ENCODE measurements at regions of chr2 and their contacts with region 1.

Region 1: DNA sequence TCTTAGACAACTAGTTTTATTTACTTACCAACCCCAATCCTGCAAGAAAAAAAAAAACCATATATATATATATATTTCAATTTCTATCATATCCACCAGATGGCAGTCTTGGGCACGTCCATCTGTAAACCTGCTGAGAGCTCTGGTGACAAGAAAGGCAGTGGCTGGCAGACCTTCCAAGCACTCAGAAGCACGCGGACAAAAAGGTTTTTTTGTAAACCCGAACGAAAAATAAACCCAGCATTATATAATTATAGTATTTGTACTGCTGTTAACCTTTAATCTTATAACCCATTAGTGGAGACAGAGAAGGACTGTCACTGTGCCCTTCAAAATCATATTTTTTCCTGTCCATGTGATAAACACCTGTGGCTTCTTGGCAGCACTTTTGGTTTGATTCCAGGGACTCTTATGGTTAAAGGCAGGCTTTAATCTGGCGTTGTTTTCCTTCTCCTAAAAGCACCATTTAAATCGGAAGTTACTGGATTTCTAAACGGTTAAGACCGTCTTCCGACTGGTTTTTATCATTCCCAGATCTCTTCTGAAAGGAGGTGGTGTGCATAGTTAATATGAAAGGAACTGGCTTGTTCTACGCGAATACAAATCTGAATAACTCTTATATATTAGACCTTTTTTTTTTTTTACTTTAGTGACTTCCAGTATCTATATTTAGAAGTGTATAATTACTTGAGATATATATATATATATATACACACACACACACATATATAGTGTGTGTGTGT is 31.0 kb upstream of the SLC3A1 start:
- DNase-seq: peak in 4 of 6 donors; percentile 73 to 79 (median 76)
- ATAC-seq: peak; percentile 73 to 87 (median 83)
- H3K4me3 ChIP-seq: peak overlapping the region in 2 of 4 donors; percentile 17 to 19
- H3K27ac ChIP-seq: peak overlapping the region; percentile 70 to 95 (median 83)
- H3K4me1 ChIP-seq: peaks cover 23 to 31% (median 30%) of the 10 kb centered on the region in 3 donors
- H3K27me3 ChIP-seq: no peaks in the 10 kb centered on the region
- CTCF ChIP-seq: peak in 3 of 4 donors; percentile 36 to 54 (median 46)

Region 2: GRCh38 chr2:44291281-44292248 is 47.3 kb after region 1 on chr2:
- intact Hi-C with region 1: loop called in 1 of 3 experiments (anchors 5 kb)
- DNase-seq: peak in 5 of 6 donors; percentile 75 to 88 (median 85)
- ATAC-seq: peak; percentile 81 to 89 (median 88)
- H3K4me3 ChIP-seq: peak overlapping the region in 2 of 4 donors; percentile 1 to 8
- H3K27ac ChIP-seq: peak overlapping the region; percentile 58 to 83 (median 74)
- H3K4me1 ChIP-seq: peaks cover 34 to 54% (median 44%) of the 10 kb centered on the region in 3 donors
- H3K27me3 ChIP-seq: no peaks in the 10 kb centered on the region
- CTCF ChIP-seq: peak in 3 of 4 donors; percentile 29 to 42 (median 29)

Measured in pancreas (tissue), 10 donors.